GM12878 (cell line): ENCODE measurements at regions of chr20 and their contacts with region 1.

Region 1: GRCh38 chr20:21505161-21505809 is 8.6 kb downstream of the NKX2-2 start:
- DNase-seq: no peak
- ATAC-seq: peak; percentile 70
- H3K4me3 ChIP-seq: no peak overlapping the region
- H3K27ac ChIP-seq: no peak overlapping the region
- H3K4me1 ChIP-seq: peaks cover 12% of the 10 kb centered on the region
- H3K27me3 ChIP-seq: peaks cover 13 to 22% of the 10 kb centered on the region in 2 experiments
- CTCF ChIP-seq: peak; percentile 98 to 99 (median 98); a peak in 5 of 6 replicates
- EP300 ChIP-seq: no peak
- POLR2A ChIP-seq: no peak
- RAD21 ChIP-seq: peak; percentile 98

Region 2: DNA sequence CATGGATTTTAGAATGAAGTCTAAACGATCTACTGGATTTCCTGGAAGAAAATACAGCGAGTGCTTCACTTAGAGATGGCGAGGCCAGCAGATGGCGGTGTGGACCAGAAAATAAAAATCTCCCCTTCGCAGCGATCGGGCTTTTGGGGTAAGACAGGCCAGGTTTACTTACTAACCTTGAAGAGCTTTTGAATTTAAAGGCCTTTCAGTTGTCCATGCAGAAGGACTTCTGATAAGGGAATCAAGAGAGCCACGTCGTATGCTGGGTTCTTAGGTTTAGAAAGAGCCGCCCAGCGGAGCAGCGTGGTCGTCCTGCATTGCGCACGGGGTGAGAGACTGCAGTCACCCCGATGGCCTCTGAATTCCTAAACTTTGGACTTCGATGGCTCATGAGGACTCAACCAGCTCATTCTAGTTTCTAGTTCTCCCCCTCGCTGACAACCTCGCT is 667.7 kb before region 1 on chr20:
- CTCF ChIA-PET with region 1: interaction called, 11 read pairs
- POLR2A ChIA-PET with region 1: no interaction called
- RAD21 ChIA-PET with region 1: no interaction called
- SMC1A ChIA-PET with region 1: interaction called, 5 read pairs
- in situ Hi-C with region 1: no loop called
- intact Hi-C with region 1: loop called (anchors 2 kb)
- DNase-seq: no peak
- ATAC-seq: peak; percentile 36; the same call in 1 of the 3 replicates
- H3K4me3 ChIP-seq: no peak overlapping the region
- H3K27ac ChIP-seq: no peak overlapping the region
- H3K4me1 ChIP-seq: no peaks in the 10 kb centered on the region
- H3K27me3 ChIP-seq: peaks cover 0 to 2% of the 10 kb centered on the region in 2 experiments; a peak in 2 of 4 replicates
- CTCF ChIP-seq: peak; percentile 39 to 57 (median 45)
- EP300 ChIP-seq: no peak
- POLR2A ChIP-seq: no peak
- RAD21 ChIP-seq: peak; percentile 52

Region 3: GRCh38 chr20:21048841-21049273 is 456.4 kb before region 1 on chr20:
- CTCF ChIA-PET with region 1: interaction called, 34 read pairs
- POLR2A ChIA-PET with region 1: no interaction called
- RAD21 ChIA-PET with region 1: interaction called, 7 read pairs
- SMC1A ChIA-PET with region 1: interaction called, 6 read pairs
- in situ Hi-C with region 1: loop called (anchors 10 kb)
- intact Hi-C with region 1: loop called (anchors 1 kb)
- DNase-seq: no peak
- ATAC-seq: peak; percentile 93
- H3K4me3 ChIP-seq: no peak overlapping the region
- H3K27ac ChIP-seq: no peak overlapping the region
- H3K4me1 ChIP-seq: no peaks in the 10 kb centered on the region
- H3K27me3 ChIP-seq: no peaks in the 10 kb centered on the region; a peak in 1 of 4 replicates
- CTCF ChIP-seq: peak; percentile 69 to 96 (median 92)
- EP300 ChIP-seq: no peak
- POLR2A ChIP-seq: no peak
- RAD21 ChIP-seq: peak; percentile 65

Region 4: DNA sequence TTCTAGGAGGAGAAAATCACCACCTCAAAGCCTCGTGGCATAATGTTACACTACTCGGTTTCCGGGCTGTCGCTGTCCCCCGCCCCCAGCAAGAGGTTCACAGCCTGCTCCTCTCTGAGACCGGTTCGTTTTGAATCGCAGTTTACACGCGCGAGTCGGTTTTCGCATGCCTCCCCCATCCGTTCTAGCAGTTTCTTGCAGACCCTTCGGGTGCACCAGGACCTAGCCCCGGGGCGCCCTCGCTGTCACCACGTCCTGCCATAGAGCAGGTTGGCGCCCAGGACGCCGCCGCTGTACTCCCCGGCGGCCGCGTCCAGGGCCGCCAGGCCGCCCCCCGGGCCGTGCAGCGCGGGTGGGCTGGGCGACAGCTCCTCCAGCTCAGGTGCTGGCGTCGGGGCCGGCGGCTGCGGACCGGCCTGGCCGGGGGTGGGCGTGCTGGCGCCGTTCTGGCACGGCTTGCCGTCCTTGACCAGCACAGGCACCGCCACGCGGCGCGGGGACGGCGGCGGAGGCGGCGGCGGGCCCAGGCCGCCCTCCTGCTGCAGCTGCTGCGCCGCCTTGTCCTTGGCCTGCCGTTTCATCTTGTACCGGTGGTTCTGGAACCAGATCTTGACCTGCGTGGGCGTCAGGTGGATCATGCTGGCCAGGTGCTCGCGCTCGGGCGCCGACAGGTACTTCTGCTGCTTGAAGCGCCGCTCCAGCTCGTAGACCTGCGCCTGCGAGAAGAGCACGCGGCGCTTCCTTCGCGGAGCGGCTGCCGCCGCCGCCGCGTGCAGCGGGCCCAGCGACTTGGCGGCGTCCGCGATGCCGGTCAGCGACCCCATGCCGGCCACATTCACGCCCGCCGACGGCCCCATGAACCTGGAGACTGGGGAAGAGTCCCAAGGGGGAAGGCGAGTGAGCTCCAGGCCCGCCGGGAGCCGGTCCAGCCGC is 109.4 kb before region 1 on chr20:
- CTCF ChIA-PET with region 1: no interaction called
- POLR2A ChIA-PET with region 1: no interaction called
- RAD21 ChIA-PET with region 1: no interaction called
- SMC1A ChIA-PET with region 1: no interaction called
- in situ Hi-C with region 1: no loop called
- intact Hi-C with region 1: loop called (anchors 10 kb)
- DNase-seq: no peak
- ATAC-seq: no peak; the same call in 1 of the 3 replicates
- H3K4me3 ChIP-seq: 0 out of 2 replicates have a peak overlapping the region, but pooled peaks have one; percentile 34
- H3K27ac ChIP-seq: no peak overlapping the region
- H3K4me1 ChIP-seq: no peaks in the 10 kb centered on the region
- H3K27me3 ChIP-seq: peaks cover 8 to 18% of the 10 kb centered on the region in 2 experiments; a peak in 3 of 4 replicates
- CTCF ChIP-seq: no peak
- EP300 ChIP-seq: no peak
- POLR2A ChIP-seq: no peak
- RAD21 ChIP-seq: no peak

Region 5: DNA sequence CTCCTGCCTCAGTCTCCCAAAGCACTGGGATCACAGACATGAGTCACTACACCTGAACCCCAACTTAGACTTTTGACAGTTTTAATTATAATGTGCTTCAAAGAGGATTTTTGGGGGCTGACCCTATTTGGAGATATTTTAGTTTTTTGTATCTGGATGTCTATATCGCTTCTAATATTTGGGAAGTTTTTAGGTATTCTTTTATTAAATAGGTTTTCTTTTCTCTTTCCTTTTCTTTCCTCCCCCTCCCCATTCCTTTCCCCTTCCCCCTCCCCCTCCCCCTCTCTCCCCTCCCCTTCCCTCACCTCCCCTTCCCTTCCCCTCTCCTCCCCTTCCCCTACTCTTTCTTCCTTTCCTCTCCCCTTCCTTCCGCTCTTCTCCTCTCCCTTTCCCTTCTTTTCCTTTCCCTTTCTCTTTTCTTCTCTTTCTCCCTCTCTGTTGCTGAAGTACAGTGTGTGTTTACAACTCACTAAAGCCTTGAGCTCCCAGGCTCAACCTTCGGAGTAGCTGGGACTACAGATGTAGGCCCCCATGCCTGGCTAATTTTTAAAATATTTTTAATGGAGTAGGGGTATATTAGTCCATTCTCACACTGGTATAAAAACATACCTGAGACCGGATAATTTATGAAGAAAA is 83.6 kb before region 1 on chr20:
- CTCF ChIA-PET with region 1: no interaction called
- POLR2A ChIA-PET with region 1: no interaction called
- RAD21 ChIA-PET with region 1: no interaction called
- SMC1A ChIA-PET with region 1: no interaction called
- in situ Hi-C with region 1: no loop called
- intact Hi-C with region 1: no loop called
- DNase-seq: no peak
- ATAC-seq: no peak
- H3K4me3 ChIP-seq: no peak overlapping the region
- H3K27ac ChIP-seq: no peak overlapping the region
- H3K4me1 ChIP-seq: no peaks in the 10 kb centered on the region
- H3K27me3 ChIP-seq: no peaks in the 10 kb centered on the region
- CTCF ChIP-seq: no peak
- EP300 ChIP-seq: no peak
- POLR2A ChIP-seq: no peak
- RAD21 ChIP-seq: no peak

Region 6: GRCh38 chr20:21632031-21632734 is 126.9 kb after region 1 on chr20:
- CTCF ChIA-PET with region 1: no interaction called
- POLR2A ChIA-PET with region 1: no interaction called
- RAD21 ChIA-PET with region 1: no interaction called
- SMC1A ChIA-PET with region 1: no interaction called
- in situ Hi-C with region 1: no loop called
- intact Hi-C with region 1: no loop called
- DNase-seq: no peak
- ATAC-seq: no peak
- H3K4me3 ChIP-seq: no peak overlapping the region
- H3K27ac ChIP-seq: no peak overlapping the region
- H3K4me1 ChIP-seq: no peaks in the 10 kb centered on the region
- H3K27me3 ChIP-seq: no peaks in the 10 kb centered on the region
- CTCF ChIP-seq: no peak
- EP300 ChIP-seq: no peak
- POLR2A ChIP-seq: no peak
- RAD21 ChIP-seq: no peak

Region 7: GRCh38 chr20:21665687-21666446 is 160.6 kb after region 1 on chr20:
- CTCF ChIA-PET with region 1: no interaction called
- POLR2A ChIA-PET with region 1: no interaction called
- RAD21 ChIA-PET with region 1: no interaction called
- SMC1A ChIA-PET with region 1: no interaction called
- in situ Hi-C with region 1: no loop called
- intact Hi-C with region 1: no loop called
- DNase-seq: no peak
- ATAC-seq: no peak
- H3K4me3 ChIP-seq: no peak overlapping the region
- H3K27ac ChIP-seq: no peak overlapping the region
- H3K4me1 ChIP-seq: no peaks in the 10 kb centered on the region
- H3K27me3 ChIP-seq: no peaks in the 10 kb centered on the region
- CTCF ChIP-seq: no peak
- EP300 ChIP-seq: no peak
- POLR2A ChIP-seq: no peak
- RAD21 ChIP-seq: no peak